Mucosa of descending colon (tissue), 3 donors: ENCODE measurements at regions of chr5 and their contacts with region 1.

Region 1: DNA sequence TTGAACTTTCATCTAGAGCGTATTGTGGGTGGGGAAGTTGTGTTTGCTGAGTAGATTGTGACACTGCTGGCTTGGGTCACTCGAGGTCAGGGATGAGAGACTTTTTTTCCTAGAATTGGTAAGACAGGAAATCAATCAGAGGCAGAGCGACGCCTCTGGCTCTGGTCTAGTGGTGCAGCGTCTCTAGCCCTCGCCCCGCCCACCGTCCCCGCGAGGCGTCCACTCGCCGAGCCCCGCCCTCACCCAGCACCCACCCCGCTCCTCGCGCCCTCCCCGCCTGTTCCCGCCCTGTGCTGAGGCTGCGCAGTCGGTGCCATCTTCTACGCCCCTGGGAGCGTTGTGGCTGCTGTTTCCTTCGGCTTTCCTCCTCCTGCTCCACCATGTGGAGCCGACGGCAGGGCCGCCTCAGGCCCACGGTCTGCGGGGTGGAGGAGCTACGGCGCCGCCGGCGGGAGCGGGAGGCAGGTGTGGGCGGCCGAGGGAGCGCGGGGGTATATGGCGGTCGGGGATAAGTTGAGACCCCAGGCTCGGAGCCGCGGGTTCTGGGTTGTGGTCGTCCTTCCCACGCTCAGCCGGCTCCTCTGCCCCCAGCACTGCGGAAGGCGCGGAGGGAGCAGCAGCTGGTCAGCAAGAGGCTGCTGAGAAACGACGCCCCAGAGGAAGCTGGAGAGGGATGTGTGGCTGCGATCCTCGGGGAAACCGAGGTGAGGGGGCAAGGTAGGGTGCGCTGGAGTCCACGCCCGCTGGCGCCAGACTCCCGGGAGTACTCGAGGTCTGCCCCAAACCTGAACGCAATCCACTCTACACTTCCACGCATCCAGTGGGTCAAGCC is at the start of gene TMCO6:
- DNase-seq: peak; percentile 99
- ATAC-seq: peak; percentile 99
- H3K4me3 ChIP-seq: peak within 1 kb of the TSS; percentile 59
- H3K4me1 ChIP-seq: peaks cover 12% of the 10 kb centered on the region
- CTCF ChIP-seq: peak; percentile 62
- total RNA-seq, gene TMCO6: 13.6 to 21.7 (median 16.8) TPM

Region 2: DNA sequence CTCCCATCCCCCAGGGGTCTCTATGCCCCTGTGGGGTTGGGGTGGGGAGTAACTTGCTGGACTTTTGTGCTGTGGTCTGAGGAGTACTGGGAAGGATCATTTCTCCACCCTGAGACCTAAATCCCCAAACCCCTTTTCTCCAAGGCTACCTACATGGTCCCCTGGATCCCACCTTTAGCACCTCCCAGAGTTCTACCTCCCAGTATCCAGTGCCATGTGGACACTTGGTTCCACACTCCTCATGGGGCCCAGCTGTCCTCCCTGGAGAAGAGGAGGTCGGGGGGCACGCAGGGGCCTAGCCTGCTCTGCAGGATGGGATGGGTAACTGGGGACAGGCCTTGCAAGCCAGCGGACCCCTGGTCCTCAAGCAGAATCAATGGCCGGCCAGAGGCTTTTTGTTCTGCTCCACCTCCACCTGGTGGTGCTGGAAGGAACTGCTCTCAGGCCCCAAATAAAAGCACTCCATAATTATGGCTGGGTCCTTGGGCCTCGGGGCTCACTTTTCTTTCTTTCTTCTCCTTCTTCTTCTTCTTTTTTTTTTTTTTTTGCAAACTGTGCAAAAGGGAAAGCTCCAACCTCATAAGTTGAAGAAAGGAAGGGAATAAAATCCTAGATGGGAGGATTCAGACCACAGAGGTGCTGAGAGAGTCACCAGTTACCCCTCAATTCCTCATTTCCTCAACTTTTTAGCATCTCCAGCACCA is 775.4 kb before region 1 on chr5:
- intact Hi-C with region 1: no loop called
- DNase-seq: peak in 2 of 3 donors; percentile 66 to 82
- ATAC-seq: peak; percentile 70
- H3K4me3 ChIP-seq: no peak overlapping the region
- H3K4me1 ChIP-seq: no peaks in the 10 kb centered on the region
- CTCF ChIP-seq: peak; percentile 88

Region 3: DNA sequence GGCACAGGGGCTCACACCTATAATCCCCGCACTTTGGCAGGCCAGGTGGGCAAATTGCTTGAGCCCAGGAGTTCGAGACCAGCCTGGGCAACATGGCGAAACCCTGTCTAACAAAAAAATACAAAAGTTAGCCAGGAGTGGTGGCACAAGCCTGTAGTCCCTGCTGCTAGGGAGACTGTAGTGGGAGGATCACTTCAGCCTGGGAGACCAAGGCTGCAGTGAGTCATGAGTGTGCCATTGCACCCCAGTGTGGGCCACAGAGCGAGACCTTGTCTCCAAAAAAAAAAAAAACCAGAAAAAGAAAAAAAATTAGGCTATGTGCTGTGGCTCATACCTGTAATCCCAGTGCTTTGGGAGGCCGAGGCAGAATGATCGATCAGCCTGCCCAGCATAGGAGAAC is 150.4 kb before region 1 on chr5:
- intact Hi-C with region 1: no loop called
- DNase-seq: no peak
- ATAC-seq: no peak
- H3K4me3 ChIP-seq: no peak overlapping the region
- H3K4me1 ChIP-seq: no peaks in the 10 kb centered on the region
- CTCF ChIP-seq: no peak

Region 4: GRCh38 chr5:140564196-140565023 is 75.0 kb before region 1 on chr5 and contains the starts of genes APBB3 and SLC35A4:
- intact Hi-C with region 1: loop called in 1 of 2 experiments (anchors 10 kb)
- DNase-seq: peak; percentile 95 to 98 (median 96)
- ATAC-seq: peak; percentile 93
- H3K4me3 ChIP-seq: peak within 1 kb of the TSS; percentile 39
- H3K4me1 ChIP-seq: peaks cover 18% of the 10 kb centered on the region
- CTCF ChIP-seq: no peak
- total RNA-seq, gene APBB3: 18.8 to 32.5 (median 21.2) TPM
- total RNA-seq, gene SLC35A4: 65.5 to 96.9 (median 93.8) TPM

Region 5: GRCh38 chr5:140977003-140977402 is 337.6 kb after region 1 on chr5:
- intact Hi-C with region 1: no loop called
- DNase-seq: no peak
- ATAC-seq: no peak
- H3K4me3 ChIP-seq: no peak overlapping the region
- H3K4me1 ChIP-seq: no peaks in the 10 kb centered on the region
- CTCF ChIP-seq: no peak